ENCODE measurements at regions of chr16 and their contacts with region 1.

Region 1: DNA sequence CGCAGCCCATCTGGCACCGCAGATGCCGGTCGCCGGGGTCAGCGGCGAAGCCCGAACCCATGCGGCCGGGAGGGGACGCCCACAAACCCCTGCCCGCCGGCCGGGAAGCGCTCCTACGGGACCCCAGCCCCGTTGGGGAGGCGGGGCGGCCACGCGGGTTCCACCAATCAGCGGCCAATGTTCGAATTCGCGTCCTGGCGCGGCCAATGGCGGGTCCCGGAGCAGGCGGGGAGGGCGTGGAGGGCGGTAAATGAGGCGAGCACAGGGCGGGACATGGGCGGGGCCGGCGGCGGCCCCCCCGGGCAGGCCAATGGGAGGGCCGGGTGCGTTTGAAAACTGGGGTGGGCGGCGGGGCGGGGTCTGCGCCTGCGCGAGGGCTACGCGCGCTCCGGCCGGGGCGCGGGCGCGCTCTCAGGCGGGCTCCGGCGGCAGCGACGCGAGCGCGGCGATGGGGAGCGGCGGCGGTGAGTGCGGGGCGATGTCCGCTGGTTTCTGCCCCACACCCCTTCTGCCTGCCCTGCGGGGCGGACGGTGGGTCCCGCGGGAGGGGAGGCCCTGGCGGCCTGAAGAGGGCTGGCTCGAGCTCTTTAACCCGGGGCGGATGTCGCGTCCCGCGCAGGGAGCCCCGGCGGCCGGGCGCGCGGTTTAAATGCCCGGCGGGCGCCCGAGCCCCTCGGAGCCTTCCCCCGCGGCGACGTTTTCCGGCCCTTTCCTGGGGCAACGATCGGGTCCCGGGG is at the start of gene CCNF:
- DNase-seq: peak; percentile 98
- ATAC-seq: peak; percentile 97
- H3K4me3 ChIP-seq: peak within 1 kb of the TSS; percentile 45 to 84 (median 77)
- H3K4me3 Mint-ChIP-seq: peak within 1 kb of the TSS; percentile 96
- H3K27ac ChIP-seq: peak within 1 kb of the TSS in 1 of 2 donors; percentile 53
- H3K27ac Mint-ChIP-seq: peak within 1 kb of the TSS; percentile 85
- H3K4me1 ChIP-seq: peaks cover 9 to 17% of the 10 kb centered on the region in 2 donors
- H3K4me1 Mint-ChIP-seq: peaks cover 13% of the 10 kb centered on the region
- H3K27me3 ChIP-seq: no peaks in the 10 kb centered on the region
- H3K27me3 Mint-ChIP-seq: no peaks in the 10 kb centered on the region
- CTCF ChIP-seq: no peak
- total RNA-seq, gene CCNF: 4.1 and 5.3 TPM in 2 replicates

Region 2: DNA sequence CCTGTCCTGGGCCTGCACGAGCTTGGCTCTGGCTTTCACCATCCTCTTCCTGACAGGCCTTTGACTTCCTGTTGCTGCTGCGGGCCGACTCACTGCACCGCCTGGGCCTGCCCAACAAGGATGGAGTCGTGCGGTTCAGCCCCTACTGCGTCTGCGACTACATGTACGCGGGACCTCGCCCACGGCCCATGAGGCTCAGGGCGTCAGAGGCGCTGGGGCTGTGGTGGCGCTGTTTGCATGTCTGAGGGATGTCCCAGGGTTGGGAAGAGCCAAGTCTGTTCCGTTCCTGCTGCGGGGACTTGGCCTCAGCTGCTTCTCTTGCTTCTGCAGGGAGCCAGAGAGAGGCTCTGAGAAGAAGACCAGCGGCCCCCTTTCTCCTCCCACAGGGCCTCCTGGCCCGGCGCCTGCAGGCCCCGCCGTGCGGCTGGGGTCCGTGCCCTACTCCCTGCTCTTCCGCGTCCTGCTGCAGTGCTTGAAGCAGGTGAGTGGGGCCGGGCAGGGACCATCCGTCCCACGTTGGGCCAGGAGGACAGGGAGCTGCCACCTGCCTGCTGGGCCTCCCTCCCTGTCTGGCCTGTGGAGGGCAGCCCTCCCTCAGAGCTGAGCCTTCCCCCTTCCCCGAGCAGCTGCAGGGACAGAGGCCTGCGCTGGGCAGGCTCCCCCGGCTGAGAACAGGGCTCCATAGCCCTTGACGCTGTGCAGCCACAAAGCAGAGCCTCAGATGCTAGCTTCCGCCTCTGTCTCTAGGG is 357.6 kb before region 1 on chr16:
- CTCF ChIA-PET with region 1: no interaction called
- POLR2A ChIA-PET with region 1: no interaction called
- intact Hi-C with region 1: no loop called
- DNase-seq: no peak
- ATAC-seq: no peak
- H3K4me3 ChIP-seq: no peak overlapping the region
- H3K4me3 Mint-ChIP-seq: no peak overlapping the region
- H3K27ac ChIP-seq: no peak overlapping the region
- H3K27ac Mint-ChIP-seq: no peak overlapping the region
- H3K4me1 ChIP-seq: no peaks in the 10 kb centered on the region
- H3K4me1 Mint-ChIP-seq: no peaks in the 10 kb centered on the region
- H3K27me3 ChIP-seq: no peaks in the 10 kb centered on the region
- H3K27me3 Mint-ChIP-seq: no peaks in the 10 kb centered on the region
- CTCF ChIP-seq: no peak

Region 3: DNA sequence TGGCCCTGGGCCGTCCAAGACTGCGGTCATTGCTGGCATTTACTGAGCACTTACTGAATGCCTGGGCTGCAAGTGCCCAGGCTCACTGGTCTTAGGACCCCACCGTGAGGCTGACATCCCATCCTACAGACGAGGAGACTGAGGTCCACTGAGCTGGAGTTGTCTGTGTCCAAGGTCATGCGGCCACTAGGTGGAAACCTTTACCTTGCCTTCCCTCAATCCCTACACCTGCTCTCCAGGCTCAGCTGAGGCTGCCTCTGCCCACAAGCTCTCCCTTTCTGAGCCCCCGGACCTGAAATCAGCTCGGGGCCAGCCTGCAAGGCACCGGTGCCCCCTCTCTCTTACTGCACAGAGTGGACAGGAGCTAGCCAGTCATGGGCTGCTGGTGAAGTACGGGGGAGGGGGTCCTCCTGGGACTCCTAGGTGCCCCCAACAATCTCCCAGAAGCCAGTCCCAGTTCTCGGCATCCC is 234.3 kb before region 1 on chr16:
- CTCF ChIA-PET with region 1: interaction called, 14 read pairs
- POLR2A ChIA-PET with region 1: no interaction called
- intact Hi-C with region 1: no loop called
- DNase-seq: peak; percentile 77
- ATAC-seq: peak; percentile 73
- H3K4me3 ChIP-seq: peak overlapping the region in 1 of 5 experiments; percentile 44
- H3K4me3 Mint-ChIP-seq: peak overlapping the region; percentile 78
- H3K27ac ChIP-seq: no peak overlapping the region
- H3K27ac Mint-ChIP-seq: peak overlapping the region; percentile 37
- H3K4me1 ChIP-seq: peaks cover 12 to 22% of the 10 kb centered on the region in 2 donors
- H3K4me1 Mint-ChIP-seq: peaks cover 10% of the 10 kb centered on the region
- H3K27me3 ChIP-seq: peaks cover 0 to 50% (median 20%) of the 10 kb centered on the region in 4 experiments
- H3K27me3 Mint-ChIP-seq: peaks cover 28% of the 10 kb centered on the region
- CTCF ChIP-seq: peak; percentile 47

Region 4: GRCh38 chr16:2340564-2341455 is 88.4 kb before region 1 on chr16 and contains the start of gene ABCA3:
- CTCF ChIA-PET with region 1: no interaction called
- POLR2A ChIA-PET with region 1: no interaction called
- intact Hi-C with region 1: loop called (anchors 1 kb)
- DNase-seq: peak; percentile 96
- ATAC-seq: peak; percentile 83
- H3K4me3 ChIP-seq: peak within 1 kb of the TSS; percentile 17 to 69 (median 58)
- H3K4me3 Mint-ChIP-seq: peak within 1 kb of the TSS; percentile 86
- H3K27ac ChIP-seq: no peak within 1 kb of the TSS
- H3K27ac Mint-ChIP-seq: peak within 1 kb of the TSS; percentile 90
- H3K4me1 ChIP-seq: peaks cover 15 to 19% of the 10 kb centered on the region in 2 donors
- H3K4me1 Mint-ChIP-seq: peaks cover 12% of the 10 kb centered on the region
- H3K27me3 ChIP-seq: peaks cover 0 to 22% (median 3%) of the 10 kb centered on the region in 4 experiments
- H3K27me3 Mint-ChIP-seq: no peaks in the 10 kb centered on the region
- CTCF ChIP-seq: peak; percentile 100
- total RNA-seq, gene ABCA3: 5.1 and 5.4 TPM in 2 replicates

Region 5: GRCh38 chr16:2459647-2460390 is 30.6 kb after region 1 on chr16 and contains the start of gene TEDC2:
- CTCF ChIA-PET with region 1: interaction called, 3 read pairs
- POLR2A ChIA-PET with region 1: interaction called, 6 read pairs
- intact Hi-C with region 1: loop called (anchors 1 kb)
- DNase-seq: peak; percentile 96
- ATAC-seq: peak; percentile 100
- H3K4me3 ChIP-seq: peak within 1 kb of the TSS; percentile 17 to 84 (median 54)
- H3K4me3 Mint-ChIP-seq: peak within 1 kb of the TSS; percentile 94
- H3K27ac ChIP-seq: peak within 1 kb of the TSS in 1 of 2 donors; percentile 34
- H3K27ac Mint-ChIP-seq: peak within 1 kb of the TSS; percentile 68
- H3K4me1 ChIP-seq: peaks cover 10 to 16% of the 10 kb centered on the region in 2 donors
- H3K4me1 Mint-ChIP-seq: peaks cover 6% of the 10 kb centered on the region
- H3K27me3 ChIP-seq: no peaks in the 10 kb centered on the region
- H3K27me3 Mint-ChIP-seq: no peaks in the 10 kb centered on the region
- CTCF ChIP-seq: no peak
- total RNA-seq, gene TEDC2: 1.5 and 2.9 TPM in 2 replicates

Region 6: DNA sequence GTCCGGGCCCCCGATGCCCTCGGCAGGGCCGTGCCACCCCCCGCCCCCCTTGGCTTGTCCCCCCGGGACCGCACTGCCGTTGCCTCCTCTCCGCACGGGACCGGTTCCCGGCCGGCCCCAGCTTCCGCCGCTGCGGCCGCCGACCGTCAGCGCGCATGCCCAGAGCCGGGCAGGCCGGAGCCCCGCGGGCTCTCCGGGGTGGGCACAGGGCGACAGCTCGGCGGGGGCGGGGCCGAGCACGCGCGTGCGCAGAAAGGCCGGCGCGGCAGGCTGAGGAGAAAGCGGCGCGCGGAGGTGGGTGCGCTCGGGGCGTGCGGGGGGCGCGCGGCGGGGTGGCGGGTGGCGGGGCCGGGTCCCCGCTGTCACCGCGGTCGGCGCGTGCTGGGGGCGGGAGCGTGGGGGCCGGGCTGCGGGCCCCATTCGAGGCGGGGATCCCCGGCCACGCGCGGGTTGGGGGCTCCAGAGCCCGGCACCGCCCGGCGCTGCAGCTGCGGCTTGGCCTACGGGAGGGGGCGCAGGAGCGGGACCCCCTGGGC is 45.7 kb after region 1 on chr16 and contains the start of gene TBC1D24:
- CTCF ChIA-PET with region 1: interaction called, 13 read pairs
- POLR2A ChIA-PET with region 1: no interaction called
- intact Hi-C with region 1: loop called (anchors 1 kb)
- DNase-seq: peak; percentile 88
- ATAC-seq: peak; percentile 76
- H3K4me3 ChIP-seq: peak within 1 kb of the TSS; percentile 26 to 77 (median 68)
- H3K4me3 Mint-ChIP-seq: peak within 1 kb of the TSS; percentile 79
- H3K27ac ChIP-seq: peak within 1 kb of the TSS in 1 of 2 donors; percentile 62
- H3K27ac Mint-ChIP-seq: peak within 1 kb of the TSS; percentile 53
- H3K4me1 ChIP-seq: peaks cover 42 to 44% of the 10 kb centered on the region in 2 donors
- H3K4me1 Mint-ChIP-seq: peaks cover 28% of the 10 kb centered on the region
- H3K27me3 ChIP-seq: peaks cover 0 to 30% (median 22%) of the 10 kb centered on the region in 4 experiments
- H3K27me3 Mint-ChIP-seq: peaks cover 13% of the 10 kb centered on the region
- CTCF ChIP-seq: no peak
- total RNA-seq, gene TBC1D24: 8.7 and 9.4 TPM in 2 replicates

Region 7: GRCh38 chr16:2486645-2487516 is 57.7 kb after region 1 on chr16:
- CTCF ChIA-PET with region 1: interaction called, 31 read pairs
- POLR2A ChIA-PET with region 1: interaction called, 3 read pairs
- intact Hi-C with region 1: loop called (anchors 1 kb)
- DNase-seq: peak; percentile 93
- ATAC-seq: peak; percentile 96
- H3K4me3 ChIP-seq: peak overlapping the region in 2 of 5 experiments; percentile 3 to 19
- H3K4me3 Mint-ChIP-seq: peak overlapping the region; percentile 78
- H3K27ac ChIP-seq: peak overlapping the region; percentile 53 to 64
- H3K27ac Mint-ChIP-seq: peak overlapping the region; percentile 90
- H3K4me1 ChIP-seq: peaks cover 24 to 26% of the 10 kb centered on the region in 2 donors
- H3K4me1 Mint-ChIP-seq: peaks cover 19% of the 10 kb centered on the region
- H3K27me3 ChIP-seq: no peaks in the 10 kb centered on the region
- H3K27me3 Mint-ChIP-seq: no peaks in the 10 kb centered on the region
- CTCF ChIP-seq: peak; percentile 59

Region 8: DNA sequence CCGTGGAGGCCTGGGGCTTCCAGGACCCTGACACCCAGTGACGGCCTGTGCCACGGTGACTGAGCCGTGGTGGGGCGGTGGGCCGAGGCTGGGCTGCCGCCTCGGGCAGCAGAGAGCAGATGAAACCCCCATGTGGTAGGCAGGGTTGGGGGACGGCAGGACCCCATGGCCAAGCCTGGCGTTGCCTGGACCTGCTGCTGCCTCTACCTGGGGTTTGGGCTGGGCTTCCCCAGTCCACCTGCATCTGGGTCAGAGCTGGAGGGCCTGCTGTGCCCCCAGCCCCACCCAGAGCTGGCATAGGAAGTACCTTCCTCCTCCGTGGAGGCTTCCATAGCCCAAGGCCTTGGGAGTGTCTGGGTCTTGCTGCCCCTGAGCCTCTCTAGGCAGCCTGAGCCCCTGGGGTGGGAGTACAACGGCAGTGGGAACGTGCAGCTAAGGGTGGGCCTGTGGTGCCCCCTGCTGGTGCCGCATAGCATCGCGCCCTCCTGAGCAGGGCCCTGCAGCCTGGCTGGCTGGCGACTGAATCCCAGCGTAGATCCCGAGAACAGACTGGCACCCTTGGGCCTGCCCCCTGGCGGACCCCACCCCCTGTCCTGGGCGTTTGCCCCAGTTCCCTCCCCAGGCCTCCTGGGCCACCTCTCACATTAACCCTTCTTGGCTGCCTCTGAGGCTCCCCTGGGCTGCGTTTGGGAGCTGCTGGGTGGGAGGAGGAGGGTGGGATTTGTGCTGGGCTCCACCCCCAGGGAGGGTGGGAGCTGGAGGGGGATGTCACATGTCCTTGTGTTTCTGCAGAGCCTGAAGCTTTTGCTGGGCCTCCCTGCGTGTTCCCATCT is 71.9 kb after region 1 on chr16:
- CTCF ChIA-PET with region 1: interaction called, 15 read pairs
- POLR2A ChIA-PET with region 1: no interaction called
- intact Hi-C with region 1: no loop called
- DNase-seq: peak; percentile 86
- ATAC-seq: peak; percentile 97
- H3K4me3 ChIP-seq: no peak overlapping the region
- H3K4me3 Mint-ChIP-seq: no peak overlapping the region
- H3K27ac ChIP-seq: no peak overlapping the region
- H3K27ac Mint-ChIP-seq: no peak overlapping the region
- H3K4me1 ChIP-seq: peaks cover 0 to 8% of the 10 kb centered on the region in 2 donors
- H3K4me1 Mint-ChIP-seq: peaks cover 11% of the 10 kb centered on the region
- H3K27me3 ChIP-seq: no peaks in the 10 kb centered on the region
- H3K27me3 Mint-ChIP-seq: no peaks in the 10 kb centered on the region
- CTCF ChIP-seq: peak; percentile 99